Right ventricle myocardium inferior (tissue), 1 donor: ENCODE measurements at regions of chr4 and their contacts with region 1.

Region 1: DNA sequence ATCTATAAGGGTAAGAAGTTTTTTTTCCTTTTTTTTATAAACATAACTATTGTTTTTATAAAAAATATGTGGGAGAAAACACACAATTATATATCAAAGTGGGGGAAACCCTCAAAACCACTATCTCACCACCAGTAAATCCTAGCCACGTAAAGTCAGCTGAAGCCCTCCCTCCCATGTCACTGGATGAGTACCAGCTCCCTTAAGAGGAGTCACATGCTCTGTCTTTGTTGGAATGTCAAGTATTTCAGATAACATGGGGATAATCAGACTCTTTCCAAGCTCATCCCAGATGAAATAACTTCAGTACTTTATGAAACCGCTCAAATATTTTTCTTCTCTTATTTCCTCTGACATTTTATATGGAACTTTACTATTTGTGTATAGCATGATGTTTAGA is 2.4 kb downstream of the MYOZ2 start:
- DNase-seq: no peak
- ATAC-seq: peak; percentile 65

Region 2: DNA sequence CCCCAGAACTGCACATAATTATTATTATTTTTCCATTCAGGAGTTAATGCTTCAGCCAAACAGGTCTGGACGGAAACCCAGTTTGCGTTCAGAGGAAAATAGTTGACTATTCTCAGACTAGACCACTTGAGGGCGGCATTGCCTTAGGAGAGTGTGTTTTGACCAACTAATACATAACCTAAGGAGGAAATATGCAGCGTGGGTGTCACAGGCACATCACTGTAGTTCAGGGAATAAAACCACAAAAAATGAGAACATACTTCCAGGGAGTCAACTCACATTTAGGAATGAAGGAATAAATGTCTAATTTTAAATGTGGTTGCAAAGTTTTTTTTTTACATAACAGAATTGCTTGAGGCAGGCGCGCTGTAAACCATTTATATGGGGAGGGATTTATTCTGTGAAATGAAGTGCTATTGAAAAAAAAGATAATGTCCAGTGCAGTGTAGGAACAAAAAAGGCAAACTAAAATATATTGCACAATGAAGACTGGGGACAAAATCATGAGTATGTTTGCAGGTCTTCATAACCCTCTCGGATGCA is 156.1 kb before region 1 on chr4:
- intact Hi-C with region 1: loop called (anchors 5 kb)
- DNase-seq: peak; percentile 48
- ATAC-seq: peak; percentile 78

Region 3: GRCh38 chr4:119080716-119081541 is 57.1 kb before region 1 on chr4:
- intact Hi-C with region 1: loop called (anchors 5 kb)
- DNase-seq: no peak
- ATAC-seq: peak; percentile 42